Right cardiac atrium (tissue), 5 donors: ENCODE measurements at regions of chr17 and their contacts with region 1.

Region 1: DNA sequence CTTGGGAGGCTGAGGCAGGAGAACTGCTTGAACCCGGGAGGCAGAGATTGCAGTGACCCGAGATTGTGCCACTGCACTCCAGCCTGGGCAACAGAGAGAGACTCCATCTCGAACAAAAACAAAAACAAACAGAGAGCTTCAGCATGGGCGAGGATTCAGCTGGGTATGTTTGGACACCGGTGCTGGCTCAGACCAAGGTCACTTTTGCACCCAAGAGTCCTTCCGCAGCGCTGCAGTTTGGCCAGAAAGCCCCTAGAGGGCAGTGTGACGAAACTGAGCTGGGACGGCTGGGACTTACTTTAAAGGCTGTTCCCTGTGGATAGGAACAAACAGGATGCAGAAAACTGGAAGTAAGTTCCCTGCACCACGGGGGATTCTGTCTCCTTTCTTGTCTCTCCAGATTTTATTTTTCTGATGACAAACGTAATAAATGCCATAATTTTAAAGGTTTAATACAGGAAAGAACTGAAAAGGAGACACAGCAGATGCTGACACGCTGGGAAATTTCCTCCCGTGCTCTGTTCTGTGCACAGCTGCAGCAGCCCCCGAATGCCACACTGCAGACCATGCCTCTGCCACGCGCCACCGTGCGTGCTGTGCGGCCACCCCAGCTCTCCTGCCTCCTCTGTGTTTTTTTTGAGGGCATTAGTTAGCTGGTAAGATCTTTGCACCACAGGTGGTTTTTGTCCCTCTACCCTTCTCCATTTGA is 25.2 kb upstream of the USP36 start:
- DNase-seq: peak; percentile 77 to 92 (median 91)
- ATAC-seq: peak; percentile 73 to 79
- H3K4me3 ChIP-seq: no peak overlapping the region
- H3K27ac ChIP-seq: no peak overlapping the region
- H3K4me1 ChIP-seq: no peaks in the 10 kb centered on the region
- H3K27me3 ChIP-seq: no peaks in the 10 kb centered on the region

Region 2: GRCh38 chr17:78925234-78925633 is 59.4 kb after region 1 on chr17 and contains the start of gene TIMP2:
- intact Hi-C with region 1: loop called in 2 of 4 experiments (anchors 10 kb)
- DNase-seq: peak; percentile 91 to 96 (median 96)
- ATAC-seq: peak; percentile 77 to 79
- H3K4me3 ChIP-seq: peak within 1 kb of the TSS; percentile 97
- H3K27ac ChIP-seq: peak within 1 kb of the TSS; percentile 97
- H3K4me1 ChIP-seq: peaks cover 19% of the 10 kb centered on the region
- H3K27me3 ChIP-seq: no peaks in the 10 kb centered on the region
- total RNA-seq, gene TIMP2: 153 to 183 (median 168) TPM

Region 3: DNA sequence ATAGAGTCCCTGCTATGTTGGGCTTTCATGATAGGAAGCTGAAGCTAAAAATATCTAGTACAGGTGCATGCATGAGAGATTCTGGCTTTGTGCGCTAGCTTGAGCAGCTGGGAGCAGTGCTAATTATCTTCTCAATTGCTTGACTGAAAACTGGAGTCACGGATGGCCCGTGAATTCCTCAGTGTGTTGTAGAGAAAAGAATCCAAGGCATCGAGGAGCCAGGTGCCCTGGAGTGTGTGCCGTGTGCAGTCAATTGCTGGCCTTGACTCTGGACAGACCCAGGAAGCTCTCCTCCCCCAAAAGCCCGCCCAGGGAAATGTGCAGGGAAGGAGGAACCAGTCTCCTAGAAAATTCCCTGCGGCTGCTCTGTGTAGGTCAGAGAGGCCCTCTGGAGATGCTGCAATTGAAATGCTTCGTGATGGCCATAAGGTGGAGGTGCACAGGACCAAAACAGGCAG is 99.7 kb after region 1 on chr17:
- intact Hi-C with region 1: loop called (anchors 2 to 5 kb)
- DNase-seq: no peak
- ATAC-seq: no peak
- H3K4me3 ChIP-seq: no peak overlapping the region
- H3K27ac ChIP-seq: no peak overlapping the region
- H3K4me1 ChIP-seq: no peaks in the 10 kb centered on the region
- H3K27me3 ChIP-seq: no peaks in the 10 kb centered on the region

Region 4: GRCh38 chr17:78970834-78971773 is 105.3 kb after region 1 on chr17:
- intact Hi-C with region 1: loop called (anchors 2 to 5 kb)
- DNase-seq: peak; percentile 83 to 95 (median 92)
- ATAC-seq: peak; percentile 32 to 40
- H3K4me3 ChIP-seq: no peak overlapping the region
- H3K27ac ChIP-seq: no peak overlapping the region
- H3K4me1 ChIP-seq: no peaks in the 10 kb centered on the region
- H3K27me3 ChIP-seq: no peaks in the 10 kb centered on the region